Caco-2 (cell line): ENCODE measurements at regions of chr16 and their contacts with region 1.

Region 1: DNA sequence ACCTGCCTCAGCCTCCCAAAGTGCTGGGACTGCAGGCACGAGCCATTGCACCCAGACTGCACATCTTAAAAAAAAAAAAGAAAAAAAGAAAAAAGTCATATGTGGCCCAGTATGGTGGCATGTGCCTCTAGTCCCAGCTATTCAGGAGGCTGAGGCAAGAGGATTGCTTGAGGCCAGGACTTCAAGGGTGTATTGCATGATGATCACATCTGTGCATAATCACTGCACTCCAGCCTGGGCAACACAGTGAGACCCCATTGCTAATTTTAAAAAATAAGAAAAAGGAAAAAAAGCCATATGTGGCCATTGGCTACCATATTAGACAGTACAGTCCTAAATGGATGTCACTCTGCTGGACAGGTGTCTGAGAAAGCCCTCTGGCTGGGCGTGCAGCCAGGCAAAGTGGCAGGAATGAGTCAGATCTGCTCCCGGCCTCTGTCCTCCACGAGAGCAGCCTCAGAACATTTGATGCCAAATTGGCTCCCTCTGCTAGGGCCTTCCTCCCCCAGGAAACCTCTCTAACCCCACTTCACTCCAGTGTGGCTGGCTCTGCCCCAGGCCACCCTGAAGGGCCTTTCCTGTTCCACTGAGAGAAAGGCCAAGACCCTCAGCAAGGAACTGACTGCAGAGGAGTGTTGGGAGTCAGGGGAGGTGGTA is 14.7 kb downstream of the CA7 start:
- DNase-seq: no peak
- H3K4me3 ChIP-seq: no peak overlapping the region
- H3K4me3 Mint-ChIP-seq: no peak overlapping the region
- H3K27ac Mint-ChIP-seq: no peak overlapping the region
- H3K4me1 ChIP-seq: peaks cover 30% of the 10 kb centered on the region
- H3K4me1 Mint-ChIP-seq: peaks cover 12% of the 10 kb centered on the region
- H3K27me3 ChIP-seq: no peaks in the 10 kb centered on the region
- H3K27me3 Mint-ChIP-seq: no peaks in the 10 kb centered on the region
- CTCF ChIP-seq: no peak

Region 2: DNA sequence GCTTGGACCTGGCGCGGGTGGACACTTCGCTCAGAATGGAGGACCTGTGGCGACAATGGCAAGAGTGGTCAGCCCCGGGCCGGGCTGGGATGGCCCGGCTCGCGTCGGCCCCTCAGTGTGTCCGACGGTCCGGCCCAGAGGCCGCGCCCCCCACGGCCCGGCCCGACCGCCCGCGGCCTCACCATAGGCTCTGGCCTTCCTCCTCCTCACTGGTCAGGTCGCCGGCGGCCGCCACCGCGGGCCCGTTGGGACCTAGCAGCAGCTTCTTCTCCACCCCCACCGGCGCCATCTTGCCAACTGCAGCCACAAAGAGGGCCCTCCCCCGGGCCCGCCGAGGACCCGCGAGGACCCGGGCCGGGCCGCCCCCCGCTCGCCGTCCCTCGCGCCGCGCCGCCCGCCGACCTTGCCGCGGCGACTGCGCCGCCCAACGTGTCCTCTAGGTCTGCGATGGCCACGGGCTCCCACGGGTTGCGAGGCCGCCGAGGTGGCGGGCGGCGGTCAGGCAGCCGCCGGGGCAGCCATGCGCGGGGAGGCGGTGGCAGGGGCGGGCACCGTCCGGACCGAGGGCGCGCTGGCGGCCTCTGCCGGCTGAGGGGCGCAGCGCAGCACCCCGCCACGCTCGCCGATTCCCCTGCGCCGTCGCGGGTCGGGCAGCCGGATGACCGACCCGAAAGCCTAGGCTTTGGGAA is 107.4 kb before region 1 on chr16 and contains the start of gene DYNC1LI2:
- CTCF ChIA-PET with region 1: no interaction called
- POLR2A ChIA-PET with region 1: no interaction called
- intact Hi-C with region 1: loop called (anchors 10 kb)
- DNase-seq: peak; percentile 78 to 94
- H3K4me3 ChIP-seq: peak within 1 kb of the TSS; percentile 100
- H3K4me3 Mint-ChIP-seq: peak within 1 kb of the TSS; percentile 78
- H3K27ac Mint-ChIP-seq: peak within 1 kb of the TSS; percentile 55
- H3K4me1 ChIP-seq: peaks cover 12% of the 10 kb centered on the region; the same call in 1 of the 2 replicates
- H3K4me1 Mint-ChIP-seq: peaks cover 26% of the 10 kb centered on the region
- H3K27me3 ChIP-seq: no peaks in the 10 kb centered on the region
- H3K27me3 Mint-ChIP-seq: no peaks in the 10 kb centered on the region
- CTCF ChIP-seq: peak; percentile 61 to 95
- total RNA-seq, gene DYNC1LI2: 180 and 182 TPM in 2 replicates